CD4-positive, alpha-beta memory T cell (primary cell): ENCODE measurements at regions of chr21 and their contacts with region 1.

Region 1: GRCh38 chr21:15788847-15789493 is 59.2 kb downstream of the USP25 start:
- DNase-seq: no peak
- H3K4me3 ChIP-seq: no peak overlapping the region
- H3K4me3 Mint-ChIP-seq: no peak overlapping the region
- H3K27ac ChIP-seq: no peak overlapping the region
- H3K27ac Mint-ChIP-seq: peak overlapping the region in 2 of 7 donors; percentile 17 to 37
- H3K4me1 ChIP-seq: peaks cover 8% of the 10 kb centered on the region
- H3K4me1 Mint-ChIP-seq: peaks cover 36 to 63% (median 50%) of the 10 kb centered on the region in 4 donors
- H3K27me3 ChIP-seq: no peaks in the 10 kb centered on the region
- H3K27me3 Mint-ChIP-seq: no peaks in the 10 kb centered on the region

Region 2: DNA sequence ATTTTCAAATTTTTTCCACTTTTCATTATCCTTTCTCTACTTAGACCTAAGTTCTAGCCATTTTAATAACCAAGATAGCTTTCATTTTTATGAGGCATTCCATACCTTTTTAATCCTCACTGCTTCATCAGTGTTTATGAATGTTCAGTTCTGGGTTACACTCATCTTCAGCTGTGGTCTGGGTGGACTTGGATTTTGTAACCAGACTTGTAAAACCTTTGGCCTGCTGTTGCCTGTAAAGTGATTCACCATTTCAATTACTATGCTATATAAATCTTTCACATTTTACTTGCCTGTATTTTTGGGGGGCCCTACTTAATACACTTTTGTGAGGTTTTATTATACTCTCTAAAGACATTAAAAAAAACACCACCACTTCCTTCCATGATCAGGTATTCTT is 13.0 kb before region 1 on chr21:
- CTCF ChIA-PET with region 1: interaction called, 3 read pairs
- POLR2A ChIA-PET with region 1: no interaction called
- intact Hi-C with region 1: loop called (anchors 1 kb)
- DNase-seq: no peak
- H3K4me3 ChIP-seq: no peak overlapping the region
- H3K4me3 Mint-ChIP-seq: peak overlapping the region in 3 of 8 donors; percentile 7 to 53 (median 51)
- H3K27ac ChIP-seq: no peak overlapping the region
- H3K27ac Mint-ChIP-seq: peak overlapping the region in 1 of 7 donors; percentile 53
- H3K4me1 ChIP-seq: peaks cover 6% of the 10 kb centered on the region
- H3K4me1 Mint-ChIP-seq: peaks cover 29 to 58% (median 40%) of the 10 kb centered on the region in 4 donors
- H3K27me3 ChIP-seq: no peaks in the 10 kb centered on the region
- H3K27me3 Mint-ChIP-seq: no peaks in the 10 kb centered on the region

Region 3: DNA sequence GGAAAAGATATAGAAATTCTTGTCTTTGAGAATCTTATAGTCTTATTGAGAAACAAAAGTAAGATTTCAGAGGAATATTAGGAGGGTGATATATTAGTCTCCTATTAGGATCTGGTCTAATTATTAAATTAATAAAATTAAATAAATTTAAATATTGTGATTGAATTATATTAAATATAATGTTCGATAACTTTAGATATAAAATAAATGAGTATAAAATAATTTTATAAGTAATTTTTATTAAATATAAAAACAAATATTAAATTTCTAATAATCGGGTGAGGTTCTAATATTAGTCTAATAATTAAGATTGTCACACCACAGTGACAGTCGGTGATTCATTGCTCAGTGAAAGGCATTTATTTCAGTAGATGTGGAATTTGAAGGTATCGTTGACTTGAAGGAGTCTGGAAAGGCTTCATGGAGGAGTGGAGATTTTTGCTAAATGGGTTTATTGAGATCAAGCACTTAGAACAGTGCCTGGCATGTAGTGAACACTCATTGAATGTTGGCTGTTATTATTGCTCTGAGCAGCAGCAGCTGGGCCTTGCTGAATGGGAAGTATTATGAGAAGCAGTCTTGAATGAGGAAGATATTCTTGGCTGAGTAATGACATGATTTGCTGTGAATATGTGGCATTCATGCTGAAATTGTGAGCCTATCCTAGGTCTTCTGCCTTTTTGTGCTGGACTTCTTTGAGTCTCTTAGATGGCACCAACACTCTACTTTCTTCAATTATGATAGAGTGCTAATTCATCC is 15.5 kb after region 1 on chr21:
- CTCF ChIA-PET with region 1: no interaction called
- POLR2A ChIA-PET with region 1: no interaction called
- intact Hi-C with region 1: loop called (anchors 2 kb)
- DNase-seq: no peak
- H3K4me3 ChIP-seq: no peak overlapping the region
- H3K4me3 Mint-ChIP-seq: no peak overlapping the region
- H3K27ac ChIP-seq: no peak overlapping the region
- H3K27ac Mint-ChIP-seq: peak overlapping the region in 2 of 7 donors; percentile 30 to 61
- H3K4me1 ChIP-seq: no peaks in the 10 kb centered on the region
- H3K4me1 Mint-ChIP-seq: peaks cover 11 to 25% (median 17%) of the 10 kb centered on the region in 4 donors
- H3K27me3 ChIP-seq: no peaks in the 10 kb centered on the region
- H3K27me3 Mint-ChIP-seq: no peaks in the 10 kb centered on the region

Region 4: DNA sequence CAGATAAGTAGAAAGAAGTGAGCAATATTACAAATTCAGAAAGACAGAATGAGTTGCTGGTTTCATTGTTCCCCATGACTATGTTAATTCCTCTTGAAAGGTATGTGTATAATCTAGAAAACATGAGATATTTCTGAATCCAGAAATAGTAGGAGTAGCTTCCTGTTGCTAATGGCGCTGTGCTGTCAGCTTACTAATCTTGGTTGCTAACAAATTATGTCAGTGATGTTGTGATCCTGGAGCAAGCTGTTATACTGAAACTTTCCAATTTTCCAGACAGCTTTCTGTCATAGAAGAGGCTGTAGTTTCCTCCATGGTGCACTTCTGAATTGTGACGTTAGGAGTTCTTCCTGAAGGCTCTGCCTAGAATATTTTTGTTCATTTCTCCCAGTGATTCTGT is 313.1 kb after region 1 on chr21:
- CTCF ChIA-PET with region 1: no interaction called
- POLR2A ChIA-PET with region 1: no interaction called
- intact Hi-C with region 1: no loop called
- DNase-seq: no peak
- H3K4me3 ChIP-seq: no peak overlapping the region
- H3K4me3 Mint-ChIP-seq: no peak overlapping the region
- H3K27ac ChIP-seq: no peak overlapping the region
- H3K27ac Mint-ChIP-seq: no peak overlapping the region
- H3K4me1 ChIP-seq: no peaks in the 10 kb centered on the region
- H3K4me1 Mint-ChIP-seq: no peaks in the 10 kb centered on the region
- H3K27me3 ChIP-seq: no peaks in the 10 kb centered on the region
- H3K27me3 Mint-ChIP-seq: no peaks in the 10 kb centered on the region